Heart left ventricle (tissue), 16 donors: ENCODE measurements at regions of chr5 and their contacts with region 1.

Region 1: GRCh38 chr5:128135286-128135685 is 51.7 kb downstream of the SLC12A2 start:
- DNase-seq: no peak
- ATAC-seq: no peak
- H3K4me3 ChIP-seq: no peak overlapping the region
- H3K27ac ChIP-seq: no peak overlapping the region
- H3K4me1 ChIP-seq: no peaks in the 10 kb centered on the region
- H3K27me3 ChIP-seq: no peaks in the 10 kb centered on the region
- CTCF ChIP-seq: no peak
- POLR2A ChIP-seq: no peak

Region 2: GRCh38 chr5:128174951-128175350 is 39.7 kb after region 1 on chr5:
- intact Hi-C with region 1: loop called in 1 of 10 experiments (anchors 5 kb)
- DNase-seq: no peak
- ATAC-seq: no peak
- H3K4me3 ChIP-seq: no peak overlapping the region
- H3K27ac ChIP-seq: no peak overlapping the region
- H3K4me1 ChIP-seq: no peaks in the 10 kb centered on the region
- H3K27me3 ChIP-seq: no peaks in the 10 kb centered on the region
- CTCF ChIP-seq: no peak
- POLR2A ChIP-seq: no peak